ENCODE measurements at regions of chr5 and their contacts with region 1.

Region 1: DNA sequence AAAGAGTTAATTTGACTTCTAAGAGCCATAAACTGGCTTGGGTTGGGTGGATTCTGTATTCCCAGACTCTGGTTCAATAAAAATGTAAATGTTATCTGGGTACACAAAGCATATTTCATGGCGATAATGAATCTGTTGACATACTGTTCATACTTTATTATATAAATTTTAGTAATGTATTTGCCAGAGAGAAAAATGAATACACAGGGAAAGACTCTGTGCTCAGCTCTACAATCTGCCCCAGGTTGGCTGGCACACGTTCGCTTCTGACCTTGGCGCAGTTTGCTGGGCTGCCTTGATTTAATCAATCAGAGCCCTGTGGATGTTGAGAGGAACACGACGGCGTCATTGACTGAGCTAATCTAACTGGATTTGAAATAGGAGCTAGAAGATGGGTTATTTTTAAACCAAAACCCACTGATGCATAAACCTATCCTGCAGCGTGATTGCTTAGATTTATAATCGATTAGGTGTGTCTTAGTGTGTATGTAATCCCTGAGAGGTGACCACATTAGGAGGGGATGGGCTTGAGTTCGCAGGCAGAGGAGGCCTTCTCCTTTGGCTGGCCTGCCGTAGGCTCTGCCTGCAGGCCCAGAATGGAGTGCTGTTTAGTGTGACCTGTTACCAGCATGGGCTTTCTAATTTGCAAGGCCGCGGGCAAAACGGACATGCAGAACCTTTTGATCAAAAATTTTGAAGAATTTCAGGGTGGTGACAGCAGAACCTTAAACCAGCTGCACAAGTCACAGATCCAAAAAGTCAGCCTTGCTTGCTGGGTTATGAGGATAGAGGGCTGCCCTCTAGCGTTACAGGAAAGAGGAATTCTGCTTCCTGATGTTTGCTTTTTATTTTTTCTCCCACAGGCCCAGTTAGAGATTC is 3.9 kb upstream of the ADCY2 start:
- DNase-seq: peak; percentile 49
- H3K4me3 ChIP-seq: no peak overlapping the region
- H3K27ac ChIP-seq: peak overlapping the region in 1 of 2 donors; percentile 12
- H3K4me1 ChIP-seq: no peaks in the 10 kb centered on the region
- H3K27me3 ChIP-seq: no peaks in the 10 kb centered on the region
- CTCF ChIP-seq: peak; percentile 41 to 70 (median 60)
- POLR2A ChIP-seq: no peak

Region 2: GRCh38 chr5:7078901-7079300 is 313.2 kb before region 1 on chr5:
- intact Hi-C with region 1: loop called (anchors 5 kb)
- DNase-seq: no peak
- H3K4me3 ChIP-seq: no peak overlapping the region
- H3K27ac ChIP-seq: no peak overlapping the region
- H3K4me1 ChIP-seq: no peaks in the 10 kb centered on the region
- H3K27me3 ChIP-seq: no peaks in the 10 kb centered on the region
- CTCF ChIP-seq: peak in 2 of 4 experiments; percentile 31 to 32
- POLR2A ChIP-seq: no peak

Region 3: DNA sequence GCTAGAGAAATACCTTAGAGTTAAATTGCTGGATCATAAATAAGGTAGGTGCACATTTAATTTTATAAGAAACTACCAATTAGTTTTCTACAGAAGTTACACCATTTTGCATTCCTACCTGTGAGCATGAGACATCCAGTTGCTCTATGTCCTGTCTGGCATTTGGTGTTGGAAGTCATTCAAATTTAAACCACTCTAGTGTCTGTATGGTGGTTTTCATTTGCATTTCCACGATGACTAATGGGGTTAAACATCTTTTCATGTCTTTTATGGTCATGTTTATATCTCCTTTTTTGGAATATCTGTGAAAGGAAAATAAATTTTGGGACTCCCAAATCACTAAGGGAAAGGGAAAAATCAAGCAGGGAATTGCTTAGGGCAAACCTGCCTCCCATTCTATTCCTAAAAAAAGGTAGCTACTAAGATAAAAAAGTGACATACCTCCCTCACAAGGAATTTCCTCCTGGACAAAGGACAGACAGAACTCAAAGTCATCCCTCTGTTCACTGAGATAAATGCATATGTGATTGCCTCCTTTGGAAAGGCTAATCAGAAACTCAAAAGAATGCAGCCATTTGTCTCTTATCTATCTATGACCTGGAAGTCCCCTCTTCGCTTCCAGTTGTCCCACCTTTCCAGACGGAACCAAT is 27.7 kb before region 1 on chr5:
- intact Hi-C with region 1: no loop called
- DNase-seq: no peak
- H3K4me3 ChIP-seq: no peak overlapping the region
- H3K27ac ChIP-seq: no peak overlapping the region
- H3K4me1 ChIP-seq: no peaks in the 10 kb centered on the region
- H3K27me3 ChIP-seq: no peaks in the 10 kb centered on the region
- CTCF ChIP-seq: no peak
- POLR2A ChIP-seq: no peak

Region 4: GRCh38 chr5:7518947-7519560 is 127.0 kb after region 1 on chr5:
- intact Hi-C with region 1: loop called (anchors 5 kb)
- DNase-seq: no peak
- H3K4me3 ChIP-seq: no peak overlapping the region
- H3K27ac ChIP-seq: no peak overlapping the region
- H3K4me1 ChIP-seq: no peaks in the 10 kb centered on the region
- H3K27me3 ChIP-seq: no peaks in the 10 kb centered on the region
- CTCF ChIP-seq: peak in 1 of 4 experiments; percentile 11
- POLR2A ChIP-seq: no peak

Region 5: GRCh38 chr5:7745882-7746610 is 354.0 kb after region 1 on chr5:
- intact Hi-C with region 1: loop called (anchors 5 kb)
- DNase-seq: peak; percentile 69
- H3K4me3 ChIP-seq: no peak overlapping the region
- H3K27ac ChIP-seq: no peak overlapping the region
- H3K4me1 ChIP-seq: no peaks in the 10 kb centered on the region
- H3K27me3 ChIP-seq: no peaks in the 10 kb centered on the region
- CTCF ChIP-seq: peak; percentile 72 to 87 (median 82)
- POLR2A ChIP-seq: no peak

Region 6: DNA sequence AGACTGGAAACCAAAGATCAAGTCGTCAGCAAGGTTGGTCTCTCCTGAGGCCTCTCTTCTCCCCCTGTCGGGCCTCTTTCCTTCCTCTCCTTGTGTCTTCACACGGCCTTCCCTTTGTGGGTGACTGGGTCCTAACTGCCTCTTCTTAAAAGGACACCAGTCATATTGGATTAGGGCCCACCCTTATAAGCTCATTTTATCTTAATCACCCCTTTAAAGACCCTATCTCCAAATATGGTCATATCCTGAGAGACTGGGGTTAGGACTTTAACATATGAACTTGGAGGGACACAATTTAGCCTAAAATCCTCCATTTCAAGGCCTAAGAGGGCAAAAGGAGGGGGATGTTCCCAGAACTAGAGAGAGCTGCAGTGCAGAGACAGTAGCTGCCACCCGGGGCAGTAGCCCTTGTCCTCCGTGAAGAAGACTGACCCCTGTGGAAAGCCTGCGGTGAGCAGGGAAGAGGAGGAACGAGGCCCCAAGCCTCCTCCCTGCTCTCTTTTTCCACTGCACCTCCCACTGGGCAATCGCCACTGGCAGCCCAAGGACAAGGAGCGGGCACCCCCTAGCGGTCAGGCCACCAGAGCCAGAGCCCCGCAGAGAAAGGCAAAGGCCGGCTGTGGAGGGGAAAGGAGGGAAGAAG is 424.0 kb after region 1 on chr5:
- intact Hi-C with region 1: loop called (anchors 2 kb)
- DNase-seq: peak; percentile 73
- H3K4me3 ChIP-seq: no peak overlapping the region
- H3K27ac ChIP-seq: peak overlapping the region; percentile 2 to 4
- H3K4me1 ChIP-seq: no peaks in the 10 kb centered on the region
- H3K27me3 ChIP-seq: no peaks in the 10 kb centered on the region
- CTCF ChIP-seq: peak; percentile 71 to 85 (median 79)
- POLR2A ChIP-seq: no peak

Region 7: GRCh38 chr5:7868773-7869473 is 476.9 kb after region 1 on chr5 and contains the starts of genes FASTKD3 and MTRR:
- intact Hi-C with region 1: loop called (anchors 5 kb)
- DNase-seq: peak; percentile 94
- H3K4me3 ChIP-seq: peak within 1 kb of the TSS; percentile 88 to 92
- H3K27ac ChIP-seq: peak within 1 kb of the TSS; percentile 77
- H3K4me1 ChIP-seq: peaks cover 4% of the 10 kb centered on the region
- H3K27me3 ChIP-seq: no peaks in the 10 kb centered on the region
- CTCF ChIP-seq: no peak
- POLR2A ChIP-seq: peak; percentile 63
- total RNA-seq, gene FASTKD3: 9.7 to 10.7 TPM
- total RNA-seq, gene MTRR: 34.5 to 64.6 TPM